ENCODE measurements at regions of chr14 and their contacts with region 1.

Region 1: GRCh38 chr14:21631038-21631437 is 3.7 kb downstream of the OR10G2 start:
- DNase-seq: no peak
- H3K4me3 ChIP-seq: no peak overlapping the region
- CTCF ChIP-seq: no peak
- POLR2A ChIP-seq: no peak

Region 2: DNA sequence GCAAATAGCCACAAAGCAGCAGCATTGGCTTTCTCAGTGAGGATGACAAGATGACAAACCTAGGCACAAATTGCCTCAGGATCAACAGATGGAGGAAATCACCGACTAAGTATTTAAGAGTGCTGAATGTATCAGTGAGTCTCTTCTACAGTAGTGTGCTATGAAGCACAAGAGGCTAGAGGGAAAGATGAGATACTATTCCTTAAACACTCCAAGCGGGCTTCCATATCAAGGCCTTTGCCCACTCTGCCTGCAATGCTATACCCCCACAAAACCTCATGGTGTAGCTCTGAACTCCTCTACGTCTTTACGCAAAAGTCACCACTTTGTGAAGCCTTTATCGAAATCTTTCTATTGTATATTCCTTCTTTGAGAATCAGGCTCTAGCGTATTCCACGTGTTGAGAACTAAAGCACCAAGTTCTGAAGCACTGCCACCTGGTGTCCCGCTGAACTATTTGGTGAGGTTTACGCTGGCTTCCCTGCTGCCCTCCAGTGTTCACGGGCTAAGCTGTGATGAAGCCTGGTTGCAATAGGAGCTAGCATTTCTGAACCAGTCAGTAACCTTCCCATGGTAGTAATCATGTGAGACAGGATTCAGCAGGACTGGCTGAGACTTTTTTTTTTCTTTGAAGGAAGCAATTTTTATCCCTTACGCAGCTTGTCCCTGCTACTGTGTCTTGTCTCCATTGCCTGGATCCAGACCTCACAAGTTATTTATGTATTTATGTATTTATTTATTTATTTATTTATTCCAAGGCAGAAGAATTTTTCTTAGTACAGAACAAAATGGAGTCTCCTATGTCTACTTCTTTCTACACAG is 469.1 kb after region 1 on chr14:
- intact Hi-C with region 1: loop called (anchors 5 kb)
- DNase-seq: peak; percentile 75 to 91
- H3K4me3 ChIP-seq: no peak overlapping the region
- CTCF ChIP-seq: peak in 1 of 3 donors; percentile 32
- POLR2A ChIP-seq: no peak

Measured in lower leg skin (tissue), 4 donors.